PC-9 (cell line): ENCODE measurements at regions of chr12 and their contacts with region 1.

Region 1: DNA sequence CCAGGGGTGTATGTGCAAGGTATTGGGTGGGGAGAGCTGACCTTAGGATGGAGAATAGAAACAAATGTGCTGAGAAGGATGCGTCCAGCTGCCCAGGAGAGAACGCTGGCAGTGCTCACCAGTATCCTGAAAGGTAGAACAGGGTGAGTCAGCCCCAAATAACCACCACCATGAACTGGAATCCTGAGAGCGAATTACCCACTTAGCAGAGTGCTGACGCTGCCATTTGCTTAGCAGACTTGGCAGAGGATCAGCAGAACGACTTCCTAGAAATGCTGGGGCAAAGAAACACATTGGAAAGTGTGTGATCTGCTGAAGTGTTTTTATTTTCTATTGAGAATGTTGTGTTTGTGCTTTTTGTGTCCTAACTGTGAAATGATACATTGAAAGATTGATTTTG is 213.6 kb downstream of the ADGRD1 start:
- DNase-seq: no peak
- H3K4me3 ChIP-seq: no peak overlapping the region
- H3K27ac ChIP-seq: no peak overlapping the region
- H3K4me1 ChIP-seq: no peaks in the 10 kb centered on the region
- H3K27me3 ChIP-seq: peaks cover 19% of the 10 kb centered on the region; the same call in 1 of the 2 replicates
- CTCF ChIP-seq: no peak

Region 2: DNA sequence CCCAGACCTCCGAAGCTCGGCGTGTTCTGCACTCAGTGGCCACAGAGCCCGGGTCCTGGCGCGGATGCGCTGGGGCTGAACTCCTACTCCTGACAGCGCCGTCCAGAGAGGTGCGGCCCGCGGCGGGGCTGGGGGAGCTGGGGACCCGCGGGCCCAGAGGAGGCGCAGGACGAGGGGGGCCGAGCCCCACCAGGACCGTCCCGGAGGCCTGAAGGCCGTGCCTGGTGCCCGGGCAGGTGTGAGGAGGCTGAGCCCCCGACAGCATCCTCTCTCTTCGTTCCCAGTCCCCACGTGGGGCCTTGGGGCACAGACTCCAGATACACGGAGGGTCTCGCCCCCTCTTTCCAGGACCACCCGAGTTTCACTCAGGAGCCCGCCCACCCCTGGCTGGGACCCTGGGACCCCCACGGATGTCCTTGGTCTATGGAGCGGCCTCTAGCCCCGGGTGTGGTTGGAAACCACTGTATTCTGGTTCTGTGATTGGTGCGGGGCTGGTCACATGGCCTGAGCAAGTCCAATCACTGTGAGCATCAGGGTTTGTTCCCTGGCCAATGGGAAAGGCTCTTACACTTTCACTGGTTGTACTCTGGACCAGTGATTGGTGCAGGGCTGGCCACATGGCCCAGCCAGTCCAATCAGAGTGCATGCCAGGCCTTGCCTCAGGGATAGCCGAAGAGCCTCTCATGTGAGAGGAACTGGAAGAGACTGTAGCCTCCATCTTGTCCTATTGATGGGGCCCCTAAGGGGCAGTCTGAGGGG is 325.9 kb after region 1 on chr12:
- CTCF ChIA-PET with region 1: no interaction called
- POLR2A ChIA-PET with region 1: no interaction called
- intact Hi-C with region 1: loop called (anchors 5 kb)
- DNase-seq: no peak
- H3K4me3 ChIP-seq: no peak overlapping the region
- H3K27ac ChIP-seq: no peak overlapping the region
- H3K4me1 ChIP-seq: no peaks in the 10 kb centered on the region
- H3K27me3 ChIP-seq: peaks cover 89% of the 10 kb centered on the region
- CTCF ChIP-seq: no peak